Mammary epithelial cell (primary cell): ENCODE measurements at regions of chr4 and their contacts with region 1.

Region 1: GRCh38 chr4:41214136-41214824 is at the start of gene APBB2:
- DNase-seq: peak; percentile 96
- H3K4me3 ChIP-seq: peak within 1 kb of the TSS; percentile 91 to 95 (median 92)
- H3K27ac ChIP-seq: peak within 1 kb of the TSS; percentile 84
- H3K4me1 ChIP-seq: peaks cover 25% of the 10 kb centered on the region
- H3K27me3 ChIP-seq: no peaks in the 10 kb centered on the region
- CTCF ChIP-seq: peak; percentile 48 to 78
- total RNA-seq, gene APBB2: 75.8 to 81.7 TPM

Region 2: DNA sequence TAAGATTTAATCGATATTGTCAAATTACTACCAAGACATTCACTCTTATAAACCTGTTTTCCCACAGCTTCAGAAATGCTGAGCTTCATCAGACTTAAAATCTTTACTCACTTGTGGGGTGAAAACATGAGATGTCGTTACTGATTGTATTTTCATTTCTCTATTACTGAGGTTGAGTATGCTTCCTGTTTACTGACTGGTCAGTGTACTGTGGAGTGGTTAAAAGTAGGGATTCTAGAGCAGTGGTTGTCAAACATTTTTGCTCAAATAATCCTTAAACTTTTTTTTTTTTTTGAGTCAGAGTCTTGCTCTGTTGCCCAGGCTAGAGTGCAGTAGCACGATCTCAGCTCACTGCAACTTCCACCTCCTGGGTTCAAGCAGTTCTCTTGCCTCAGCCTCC is 414.2 kb before region 1 on chr4:
- CTCF ChIA-PET with region 1: interaction called, 15 read pairs
- dilution Hi-C with region 1: no loop called
- in situ Hi-C with region 1: no loop called
- intact Hi-C with region 1: no loop called
- DNase-seq: no peak
- H3K4me3 ChIP-seq: no peak overlapping the region
- H3K27ac ChIP-seq: no peak overlapping the region
- H3K4me1 ChIP-seq: no peaks in the 10 kb centered on the region
- H3K27me3 ChIP-seq: no peaks in the 10 kb centered on the region
- CTCF ChIP-seq: no peak

Region 3: GRCh38 chr4:40924096-40924792 is 290.0 kb before region 1 on chr4:
- CTCF ChIA-PET with region 1: interaction called, 5 read pairs
- dilution Hi-C with region 1: no loop called
- in situ Hi-C with region 1: loop called (anchors 5 to 10 kb)
- intact Hi-C with region 1: loop called (anchors 1 kb)
- DNase-seq: no peak
- H3K4me3 ChIP-seq: no peak overlapping the region
- H3K27ac ChIP-seq: no peak overlapping the region
- H3K4me1 ChIP-seq: no peaks in the 10 kb centered on the region
- H3K27me3 ChIP-seq: no peaks in the 10 kb centered on the region
- CTCF ChIP-seq: peak; percentile 86 to 90

Region 4: GRCh38 chr4:40986375-40986774 is 227.9 kb before region 1 on chr4:
- CTCF ChIA-PET with region 1: interaction called, 9 read pairs
- dilution Hi-C with region 1: loop called (anchors 25 kb)
- in situ Hi-C with region 1: loop called in 1 of 2 experiments (anchors 5 kb)
- intact Hi-C with region 1: no loop called
- DNase-seq: no peak
- H3K4me3 ChIP-seq: no peak overlapping the region
- H3K27ac ChIP-seq: no peak overlapping the region
- H3K4me1 ChIP-seq: peaks cover 17% of the 10 kb centered on the region
- H3K27me3 ChIP-seq: no peaks in the 10 kb centered on the region
- CTCF ChIP-seq: no peak

Region 5: GRCh38 chr4:41124916-41125548 is 89.2 kb before region 1 on chr4:
- CTCF ChIA-PET with region 1: interaction called, 4 read pairs
- dilution Hi-C with region 1: no loop called
- in situ Hi-C with region 1: no loop called
- intact Hi-C with region 1: loop called (anchors 2 kb)
- DNase-seq: peak; percentile 63
- H3K4me3 ChIP-seq: no peak overlapping the region
- H3K27ac ChIP-seq: peak overlapping the region; percentile 96
- H3K4me1 ChIP-seq: peaks cover 43% of the 10 kb centered on the region
- H3K27me3 ChIP-seq: no peaks in the 10 kb centered on the region
- CTCF ChIP-seq: no peak

Region 6: GRCh38 chr4:41160012-41160789 is 54.1 kb before region 1 on chr4:
- CTCF ChIA-PET with region 1: interaction called, 5 read pairs
- dilution Hi-C with region 1: no loop called
- in situ Hi-C with region 1: no loop called
- intact Hi-C with region 1: loop called (anchors 1 kb)
- DNase-seq: peak; percentile 97
- H3K4me3 ChIP-seq: no peak overlapping the region
- H3K27ac ChIP-seq: peak overlapping the region; percentile 88
- H3K4me1 ChIP-seq: peaks cover 69% of the 10 kb centered on the region
- H3K27me3 ChIP-seq: no peaks in the 10 kb centered on the region
- CTCF ChIP-seq: no peak

Region 7: GRCh38 chr4:41185614-41186597 is 28.4 kb before region 1 on chr4:
- CTCF ChIA-PET with region 1: interaction called, 20 read pairs
- dilution Hi-C with region 1: no loop called
- in situ Hi-C with region 1: no loop called
- intact Hi-C with region 1: no loop called
- DNase-seq: peak; percentile 58
- H3K4me3 ChIP-seq: peak overlapping the region; percentile 4 to 42 (median 9)
- H3K27ac ChIP-seq: peak overlapping the region; percentile 74
- H3K4me1 ChIP-seq: peaks cover 18% of the 10 kb centered on the region
- H3K27me3 ChIP-seq: no peaks in the 10 kb centered on the region
- CTCF ChIP-seq: no peak

Region 8: DNA sequence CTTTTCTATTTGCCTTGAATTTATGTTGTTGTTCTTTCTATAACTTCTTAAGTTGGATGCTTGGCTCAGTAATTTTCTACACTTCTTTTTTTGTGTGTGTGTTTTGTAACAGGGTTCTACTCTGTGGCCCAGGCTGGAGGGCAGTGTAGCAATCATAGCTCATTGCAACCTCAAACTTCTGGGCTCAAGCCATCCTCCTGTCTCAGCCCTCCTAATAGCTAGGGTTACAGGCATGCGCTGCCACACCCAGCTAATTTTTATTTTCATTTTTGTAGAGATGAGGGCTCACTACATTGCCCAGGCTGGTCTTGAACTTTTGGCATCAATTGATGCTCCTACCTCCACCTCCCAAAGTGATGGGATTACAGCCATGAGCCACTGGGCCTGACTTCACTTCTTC is 21.8 kb after region 1 on chr4:
- CTCF ChIA-PET with region 1: no interaction called
- dilution Hi-C with region 1: no loop called
- in situ Hi-C with region 1: no loop called
- intact Hi-C with region 1: no loop called
- DNase-seq: no peak
- H3K4me3 ChIP-seq: no peak overlapping the region
- H3K27ac ChIP-seq: no peak overlapping the region
- H3K4me1 ChIP-seq: no peaks in the 10 kb centered on the region
- H3K27me3 ChIP-seq: no peaks in the 10 kb centered on the region
- CTCF ChIP-seq: no peak